ENCODE measurements at regions of chr12 and their contacts with region 1.

Region 1: GRCh38 chr12:44774815-44775411 is 101.2 kb downstream of the NELL2 start:
- DNase-seq: peak; percentile 21
- ATAC-seq: peak; percentile 77
- H3K4me3 ChIP-seq: no peak overlapping the region
- H3K27ac ChIP-seq: no peak overlapping the region
- H3K4me1 ChIP-seq: no peaks in the 10 kb centered on the region
- H3K27me3 ChIP-seq: 0 out of 5 replicates have a peak, but pooled peaks cover 0 to 2% of the 10 kb centered on the region in 2 experiments
- CTCF ChIP-seq: peak; percentile 70
- EP300 ChIP-seq: no peak
- POLR2A ChIP-seq: no peak
- RAD21 ChIP-seq: 0 out of 2 replicates have a peak, but pooled peaks have one; percentile 17

Region 2: GRCh38 chr12:44709166-44709565 is 65.7 kb before region 1 on chr12:
- CTCF ChIA-PET with region 1: no interaction called
- POLR2A ChIA-PET with region 1: no interaction called
- in situ Hi-C with region 1: no loop called
- intact Hi-C with region 1: no loop called
- DNase-seq: no peak
- ATAC-seq: no peak
- H3K4me3 ChIP-seq: no peak overlapping the region
- H3K27ac ChIP-seq: no peak overlapping the region
- H3K4me1 ChIP-seq: no peaks in the 10 kb centered on the region
- H3K27me3 ChIP-seq: no peaks in the 10 kb centered on the region
- CTCF ChIP-seq: no peak
- EP300 ChIP-seq: no peak
- POLR2A ChIP-seq: no peak
- RAD21 ChIP-seq: no peak

Region 3: GRCh38 chr12:44812062-44812461 is 37.1 kb after region 1 on chr12:
- CTCF ChIA-PET with region 1: no interaction called
- POLR2A ChIA-PET with region 1: no interaction called
- in situ Hi-C with region 1: no loop called
- intact Hi-C with region 1: no loop called
- DNase-seq: no peak
- ATAC-seq: peak; percentile 61; the same call in 2 of the 3 replicates
- H3K4me3 ChIP-seq: no peak overlapping the region
- H3K27ac ChIP-seq: no peak overlapping the region
- H3K4me1 ChIP-seq: no peaks in the 10 kb centered on the region
- H3K27me3 ChIP-seq: no peaks in the 10 kb centered on the region
- CTCF ChIP-seq: 0 out of 2 replicates have a peak, but pooled peaks have one; percentile 8
- EP300 ChIP-seq: no peak
- POLR2A ChIP-seq: no peak
- RAD21 ChIP-seq: no peak

Region 4: GRCh38 chr12:44930972-44931600 is 156.2 kb after region 1 on chr12:
- CTCF ChIA-PET with region 1: interaction called, 15 read pairs
- POLR2A ChIA-PET with region 1: no interaction called
- in situ Hi-C with region 1: loop called (anchors 10 kb)
- intact Hi-C with region 1: loop called (anchors 1 kb)
- DNase-seq: peak; percentile 49
- ATAC-seq: no peak
- H3K4me3 ChIP-seq: no peak overlapping the region
- H3K27ac ChIP-seq: no peak overlapping the region
- H3K4me1 ChIP-seq: no peaks in the 10 kb centered on the region
- H3K27me3 ChIP-seq: peaks cover 0 to 3% of the 10 kb centered on the region in 2 experiments; a peak in 1 of 5 replicates
- CTCF ChIP-seq: peak; percentile 56
- EP300 ChIP-seq: no peak
- POLR2A ChIP-seq: no peak
- RAD21 ChIP-seq: no peak